HEK293 (cell line): ENCODE measurements at regions of chr4 and their contacts with region 1.

Region 1: DNA sequence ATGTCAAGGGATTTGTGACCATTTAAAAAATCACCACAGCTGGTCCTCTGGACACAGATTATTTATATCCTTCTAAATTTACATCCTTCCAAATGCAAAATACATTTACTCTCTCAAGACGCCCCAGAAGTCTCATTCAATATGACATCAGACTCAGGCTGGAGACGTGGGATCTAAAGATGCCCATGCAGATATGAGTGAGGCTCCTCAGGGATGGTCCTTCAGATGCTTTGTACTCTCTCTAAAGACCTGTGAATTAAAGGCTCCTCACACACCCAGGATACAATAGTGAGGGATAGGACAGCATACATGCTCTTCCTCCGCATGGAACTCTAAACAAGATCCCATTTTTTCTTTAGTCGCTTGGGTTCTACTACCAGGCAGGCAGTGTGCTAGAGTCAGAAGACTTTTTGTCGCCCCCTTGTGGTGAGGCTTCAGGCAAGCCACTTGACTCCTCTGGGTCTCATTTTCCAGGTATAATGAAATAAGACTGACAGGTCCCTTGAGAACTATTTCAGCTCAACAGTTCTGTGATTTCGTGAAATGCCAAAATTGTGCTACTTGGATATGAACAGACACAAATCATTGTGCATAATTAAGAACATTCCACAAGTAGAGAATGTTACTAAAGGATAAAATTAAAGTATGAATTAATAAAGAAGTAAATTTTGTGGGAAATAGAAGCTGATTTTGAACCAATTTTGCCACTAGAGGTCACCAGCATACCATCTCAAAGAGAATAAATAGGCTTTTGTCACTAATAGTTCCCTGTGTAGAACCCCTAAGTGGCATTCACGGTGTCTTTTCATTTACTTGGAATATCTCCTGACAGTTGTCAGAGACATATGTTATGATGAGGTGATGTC is 13.7 kb upstream of the SCOC start:
- H3K4me3 ChIP-seq: no peak overlapping the region
- H3K27ac ChIP-seq: no peak overlapping the region
- H3K4me1 ChIP-seq: peaks cover 6% of the 10 kb centered on the region; the same call in 1 of the 2 replicates
- CTCF ChIP-seq: 0 out of 2 replicates have a peak, but pooled peaks have one; percentile 33

Region 2: DNA sequence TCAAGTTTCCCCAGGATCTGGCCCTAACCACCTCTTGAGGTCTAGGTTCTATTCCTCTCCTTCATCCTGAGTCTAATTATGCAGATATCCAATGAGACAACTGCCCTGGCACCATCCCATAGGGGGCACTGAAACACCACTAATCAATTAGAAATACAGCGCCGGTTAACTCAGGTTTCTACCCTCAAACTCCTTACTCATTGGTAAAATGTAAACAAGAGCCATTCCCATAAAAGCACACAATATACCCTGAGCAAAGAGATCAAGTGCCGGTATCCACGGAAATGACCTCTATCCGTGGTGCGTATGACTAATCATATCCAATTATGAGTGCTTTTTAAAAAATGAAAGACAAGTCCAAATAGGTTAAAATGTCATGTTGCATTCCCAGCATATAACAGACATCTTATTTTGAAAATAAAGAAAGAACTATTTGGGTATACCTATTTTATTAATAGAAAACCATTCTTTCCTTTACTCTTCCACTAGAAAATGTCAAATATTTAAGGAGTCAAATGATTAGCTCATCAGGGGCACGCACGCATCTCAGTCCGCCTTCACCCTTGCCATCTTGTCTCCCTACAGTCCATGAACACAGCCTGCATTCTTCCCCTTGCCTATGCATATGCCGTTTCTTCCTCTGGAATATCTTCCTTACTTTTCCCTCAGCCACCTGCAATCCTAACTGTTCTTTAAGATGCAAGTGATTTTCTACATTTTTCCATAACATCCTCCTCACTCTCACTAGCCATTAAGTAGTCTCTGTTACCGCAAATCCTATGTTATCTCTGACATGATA is 346.9 kb before region 1 on chr4:
- CTCF ChIA-PET with region 1: interaction called, 28 read pairs
- POLR2A ChIA-PET with region 1: no interaction called
- H3K4me3 ChIP-seq: no peak overlapping the region
- H3K27ac ChIP-seq: no peak overlapping the region
- H3K4me1 ChIP-seq: no peaks in the 10 kb centered on the region
- CTCF ChIP-seq: peak; percentile 47

Region 3: DNA sequence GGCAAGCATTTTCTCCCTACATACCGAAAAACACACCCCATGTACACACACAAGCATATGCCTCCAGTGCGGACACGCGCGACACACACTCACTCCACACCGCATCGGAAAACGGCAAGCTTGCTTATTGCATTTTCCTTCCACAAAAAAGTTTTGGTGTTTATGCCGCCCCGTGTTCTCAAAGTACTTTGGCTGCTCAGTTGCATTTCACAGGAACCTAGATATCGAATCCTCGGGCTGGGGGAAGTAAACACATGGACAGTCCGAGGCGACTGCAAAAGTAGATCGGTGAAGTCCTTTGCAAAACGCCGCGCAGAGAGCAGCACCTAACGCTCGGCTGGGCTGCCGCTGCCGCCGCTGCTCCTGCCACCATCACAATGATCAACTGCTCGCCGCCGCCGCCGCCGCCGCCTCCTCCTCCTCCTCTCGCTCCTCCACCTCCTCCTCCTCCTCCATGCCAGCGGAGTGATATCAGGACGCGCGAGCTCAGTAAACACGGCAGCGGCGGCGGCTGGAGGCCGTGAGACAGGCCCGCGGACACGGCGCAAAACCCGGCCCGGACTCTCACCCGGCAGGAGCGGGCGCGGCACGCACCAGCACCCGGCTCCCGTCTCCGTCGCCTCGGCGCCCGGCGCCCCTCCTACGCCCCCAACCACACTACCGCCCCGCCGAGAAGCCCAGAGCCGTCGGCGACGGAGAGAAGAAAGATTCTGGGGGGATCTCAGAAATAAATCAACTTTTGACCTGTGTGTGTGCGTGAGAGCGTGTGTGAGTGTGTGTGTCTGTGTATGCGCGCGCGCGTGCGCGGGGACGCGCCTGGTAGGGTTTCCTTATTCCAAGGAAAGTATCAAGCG is 205.8 kb before region 1 on chr4 and contains the start of gene MAML3:
- CTCF ChIA-PET with region 1: no interaction called
- POLR2A ChIA-PET with region 1: no interaction called
- H3K4me3 ChIP-seq: peak within 1 kb of the TSS; percentile 64
- H3K27ac ChIP-seq: peak within 1 kb of the TSS; percentile 99
- H3K4me1 ChIP-seq: peaks cover 3% of the 10 kb centered on the region; the same call in 1 of the 2 replicates
- CTCF ChIP-seq: 0 out of 2 replicates have a peak, but pooled peaks have one; percentile 15

Region 4: GRCh38 chr4:140330311-140330900 is 29.4 kb before region 1 on chr4:
- CTCF ChIA-PET with region 1: interaction called, 15 read pairs
- POLR2A ChIA-PET with region 1: no interaction called
- H3K4me3 ChIP-seq: no peak overlapping the region
- H3K27ac ChIP-seq: no peak overlapping the region
- H3K4me1 ChIP-seq: no peaks in the 10 kb centered on the region
- CTCF ChIP-seq: no peak

Region 5: GRCh38 chr4:140373328-140374129 is 13.7 kb after region 1 on chr4 and contains the start of gene SCOC:
- CTCF ChIA-PET with region 1: interaction called, 34 read pairs
- POLR2A ChIA-PET with region 1: interaction called, 4 read pairs
- H3K4me3 ChIP-seq: peak within 1 kb of the TSS; percentile 87
- H3K27ac ChIP-seq: peak within 1 kb of the TSS; percentile 69; the same call in 1 of the 2 replicates
- H3K4me1 ChIP-seq: 0 out of 2 replicates have a peak, but pooled peaks cover 3% of the 10 kb centered on the region
- CTCF ChIP-seq: no peak

Region 6: GRCh38 chr4:140609548-140610425 is 250.0 kb after region 1 on chr4:
- CTCF ChIA-PET with region 1: interaction called, 63 read pairs
- POLR2A ChIA-PET with region 1: no interaction called
- H3K4me3 ChIP-seq: no peak overlapping the region
- H3K27ac ChIP-seq: no peak overlapping the region
- H3K4me1 ChIP-seq: no peaks in the 10 kb centered on the region
- CTCF ChIP-seq: no peak

Region 7: DNA sequence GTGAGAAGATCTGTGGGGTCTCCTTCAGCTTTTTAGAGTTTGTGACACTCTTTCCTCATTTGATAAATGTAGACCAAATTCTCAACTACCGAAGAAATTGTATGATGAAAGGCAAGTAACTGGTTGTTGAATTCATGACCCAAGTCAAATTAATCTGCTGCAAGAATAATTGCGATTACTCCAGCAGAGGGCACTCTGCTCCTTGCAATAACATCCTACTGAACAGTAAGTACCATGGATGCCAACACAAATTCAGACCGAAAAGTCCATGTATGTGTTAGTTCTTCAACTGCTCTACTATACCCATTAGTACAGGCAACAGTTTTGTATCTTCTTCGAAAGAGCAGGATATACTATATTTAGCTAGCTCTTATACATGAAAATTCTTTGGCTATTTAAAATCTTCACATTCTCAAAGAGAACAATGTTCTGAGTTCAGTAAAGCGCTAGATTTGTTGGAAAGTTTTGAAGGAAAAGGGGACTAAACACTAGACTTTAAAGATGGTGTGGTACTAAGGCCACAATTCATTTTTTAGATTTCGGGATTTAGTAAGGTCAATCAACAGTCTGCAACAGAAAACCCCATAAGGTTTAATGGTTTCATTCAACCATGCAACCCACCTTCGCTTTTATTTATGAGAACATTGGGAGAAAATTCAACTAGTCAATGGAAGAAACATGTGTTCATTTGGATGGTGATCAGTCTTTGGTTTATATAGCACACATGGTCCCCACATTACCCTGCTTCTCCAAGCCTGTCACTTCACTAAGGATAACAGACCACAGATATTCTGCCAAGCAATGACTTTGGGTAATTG is 501.8 kb after region 1 on chr4:
- CTCF ChIA-PET with region 1: interaction called, 10 read pairs
- POLR2A ChIA-PET with region 1: no interaction called
- H3K4me3 ChIP-seq: no peak overlapping the region
- H3K27ac ChIP-seq: no peak overlapping the region
- H3K4me1 ChIP-seq: peaks cover 8% of the 10 kb centered on the region
- CTCF ChIP-seq: peak; percentile 55